ENCODE measurements at regions of chr5 and their contacts with region 1.

Region 1: GRCh38 chr5:127313847-127314473 is 23.4 kb downstream of the MEGF10 start:
- DNase-seq: peak; percentile 83
- ATAC-seq: peak; percentile 64
- H3K4me3 Mint-ChIP-seq: no peak overlapping the region
- H3K27ac Mint-ChIP-seq: no peak overlapping the region
- H3K4me1 Mint-ChIP-seq: peaks cover 2% of the 10 kb centered on the region
- H3K27me3 Mint-ChIP-seq: peaks cover 9% of the 10 kb centered on the region

Region 2: GRCh38 chr5:126656396-126657007 is 657.5 kb before region 1 on chr5:
- CTCF ChIA-PET with region 1: interaction called, 4 read pairs
- POLR2A ChIA-PET with region 1: no interaction called
- intact Hi-C with region 1: loop called (anchors 1 kb)
- DNase-seq: peak; percentile 52
- ATAC-seq: no peak
- H3K4me3 Mint-ChIP-seq: no peak overlapping the region
- H3K27ac Mint-ChIP-seq: no peak overlapping the region
- H3K4me1 Mint-ChIP-seq: peaks cover 5% of the 10 kb centered on the region
- H3K27me3 Mint-ChIP-seq: peaks cover 2% of the 10 kb centered on the region

Region 3: GRCh38 chr5:126852091-126852571 is 461.8 kb before region 1 on chr5:
- CTCF ChIA-PET with region 1: no interaction called
- POLR2A ChIA-PET with region 1: no interaction called
- intact Hi-C with region 1: loop called in 1 of 2 experiments (anchors 10 kb)
- DNase-seq: no peak
- ATAC-seq: peak; percentile 71
- H3K4me3 Mint-ChIP-seq: peak overlapping the region; percentile 35
- H3K27ac Mint-ChIP-seq: peak overlapping the region; percentile 67
- H3K4me1 Mint-ChIP-seq: peaks cover 44% of the 10 kb centered on the region
- H3K27me3 Mint-ChIP-seq: no peaks in the 10 kb centered on the region

Region 4: DNA sequence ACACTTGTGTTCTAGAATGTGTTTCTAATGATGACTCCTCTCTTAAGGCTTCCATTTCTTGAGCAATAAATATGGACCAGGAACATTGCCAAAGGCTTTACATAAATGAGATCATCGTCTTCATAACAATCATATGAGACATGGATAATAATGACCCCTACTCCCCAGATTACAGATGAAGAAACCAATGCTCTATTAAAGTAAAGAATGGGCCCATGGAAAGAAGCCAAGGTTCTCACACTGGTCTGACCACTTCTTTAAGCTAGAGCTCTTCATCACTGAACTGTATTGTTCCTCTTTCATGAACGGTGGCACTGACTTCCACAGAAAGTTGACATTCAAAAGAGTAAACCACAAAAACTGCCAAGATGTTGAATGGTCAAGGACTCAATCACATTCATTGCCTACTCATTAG is 348.9 kb before region 1 on chr5:
- CTCF ChIA-PET with region 1: no interaction called
- POLR2A ChIA-PET with region 1: no interaction called
- intact Hi-C with region 1: loop called in 1 of 2 experiments (anchors 10 kb)
- DNase-seq: no peak
- ATAC-seq: no peak
- H3K4me3 Mint-ChIP-seq: no peak overlapping the region
- H3K27ac Mint-ChIP-seq: no peak overlapping the region
- H3K4me1 Mint-ChIP-seq: no peaks in the 10 kb centered on the region
- H3K27me3 Mint-ChIP-seq: no peaks in the 10 kb centered on the region

Region 5: DNA sequence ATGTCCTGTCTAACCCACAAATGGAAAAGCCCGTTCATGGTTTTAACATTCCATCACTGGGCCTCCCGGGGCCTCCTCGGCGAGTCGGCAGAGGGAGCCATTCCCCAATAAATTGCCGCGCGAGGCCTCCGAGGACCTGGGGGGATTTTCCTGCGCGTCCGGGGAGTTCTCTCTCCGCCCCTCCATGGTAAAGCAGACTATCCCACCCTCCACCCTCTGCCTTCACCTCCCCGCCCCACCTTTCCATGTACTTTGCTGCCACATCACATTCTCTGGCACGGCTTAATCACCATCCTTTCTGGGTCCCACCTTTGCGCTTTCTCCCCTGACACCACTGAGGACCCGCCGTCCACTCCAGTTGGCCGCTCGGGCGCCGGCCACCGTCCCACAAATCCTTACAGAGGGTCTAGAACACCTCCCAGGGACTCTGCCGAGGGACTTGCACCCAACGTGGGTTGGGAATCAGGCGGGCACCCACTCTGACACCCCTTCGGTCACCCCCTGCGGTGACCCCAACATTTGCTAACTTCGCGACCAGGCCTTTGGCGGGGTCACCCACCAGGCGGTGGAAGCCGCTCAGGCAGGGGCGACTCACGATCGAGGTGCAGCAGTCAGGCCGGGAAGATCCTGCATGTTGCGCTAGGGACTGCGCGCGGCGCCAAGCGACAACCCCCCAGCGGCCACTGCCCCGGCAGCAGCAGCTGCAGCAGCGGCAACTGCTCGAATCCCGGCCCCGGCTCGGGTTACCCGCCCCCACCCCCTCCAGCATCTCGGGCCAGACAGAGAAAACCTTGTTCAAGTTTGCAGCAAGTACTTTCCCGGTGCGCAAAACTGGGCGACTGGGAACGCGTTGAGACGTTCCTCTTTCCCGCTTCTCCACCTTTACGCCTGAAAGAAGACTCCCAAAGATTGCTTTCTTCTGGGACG is 23.7 kb before region 1 on chr5 and contains the start of gene MEGF10:
- CTCF ChIA-PET with region 1: interaction called, 7 read pairs
- POLR2A ChIA-PET with region 1: no interaction called
- intact Hi-C with region 1: loop called in 1 of 2 experiments (anchors 1 kb)
- DNase-seq: peak; percentile 62
- ATAC-seq: peak; percentile 51
- H3K4me3 Mint-ChIP-seq: peak within 1 kb of the TSS; percentile 7
- H3K27ac Mint-ChIP-seq: no peak within 1 kb of the TSS
- H3K4me1 Mint-ChIP-seq: peaks cover 13% of the 10 kb centered on the region
- H3K27me3 Mint-ChIP-seq: peaks cover 64% of the 10 kb centered on the region
- total RNA-seq, gene MEGF10: not detected

Region 6: GRCh38 chr5:127324756-127325155 is 10.8 kb after region 1 on chr5:
- CTCF ChIA-PET with region 1: interaction called, 11 read pairs
- POLR2A ChIA-PET with region 1: no interaction called
- intact Hi-C with region 1: no loop called
- DNase-seq: no peak
- ATAC-seq: no peak
- H3K4me3 Mint-ChIP-seq: no peak overlapping the region
- H3K27ac Mint-ChIP-seq: no peak overlapping the region
- H3K4me1 Mint-ChIP-seq: peaks cover 8% of the 10 kb centered on the region
- H3K27me3 Mint-ChIP-seq: no peaks in the 10 kb centered on the region